Calu3 (cell line): ENCODE measurements at regions of chr3 and their contacts with region 1.

Region 1: GRCh38 chr3:29521751-29522150 is 240.9 kb downstream of the RBMS3 start:
- DNase-seq: no peak
- H3K4me3 Mint-ChIP-seq: no peak overlapping the region
- H3K27ac Mint-ChIP-seq: no peak overlapping the region
- H3K4me1 Mint-ChIP-seq: peaks cover 26% of the 10 kb centered on the region
- H3K27me3 Mint-ChIP-seq: no peaks in the 10 kb centered on the region
- CTCF ChIP-seq: no peak

Region 2: DNA sequence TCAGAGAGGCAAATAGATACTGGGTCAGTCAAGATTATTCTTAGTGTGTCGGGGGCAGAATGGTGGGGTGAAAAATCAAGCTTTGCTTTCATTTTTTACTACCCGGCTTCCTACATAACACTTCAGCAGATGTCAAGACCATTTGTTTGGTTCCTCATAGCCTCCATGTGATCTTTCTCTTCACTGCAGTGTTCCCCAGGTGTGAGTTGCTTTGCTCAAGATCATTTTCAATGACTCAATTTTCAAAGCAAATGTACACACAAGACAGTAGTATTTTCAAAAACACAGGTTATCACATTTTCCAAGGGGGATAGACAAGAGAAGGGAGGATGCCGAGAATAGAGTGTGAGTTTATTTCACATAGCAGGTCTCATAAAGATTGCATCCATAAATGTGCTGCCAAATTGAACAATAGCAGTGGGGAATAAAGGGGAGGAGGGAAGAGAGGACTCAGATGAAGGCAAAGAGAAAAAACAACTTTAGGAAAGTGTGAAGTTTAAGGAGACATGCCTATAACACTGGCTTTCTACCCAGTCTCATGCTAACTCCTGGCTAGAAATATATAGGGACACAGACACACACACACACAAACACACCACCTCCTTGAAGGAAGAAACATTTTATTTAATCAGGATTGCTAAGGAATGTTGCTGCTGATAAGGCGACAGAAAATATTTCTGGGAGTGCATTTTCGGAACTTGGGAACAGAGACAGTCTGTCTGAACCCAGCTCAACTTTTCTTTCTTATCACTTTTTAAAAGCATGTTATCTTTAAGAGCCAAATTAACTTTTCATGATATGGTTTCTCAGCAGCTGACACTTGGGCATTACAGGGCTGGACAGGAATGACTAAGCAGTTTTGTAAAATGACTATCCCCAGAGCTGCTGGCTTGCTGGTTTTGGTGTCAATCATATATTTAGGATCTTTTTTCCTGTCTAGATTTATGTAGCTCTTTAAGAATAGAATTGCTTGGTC is 161.6 kb after region 1 on chr3:
- CTCF ChIA-PET with region 1: no interaction called
- intact Hi-C with region 1: loop called (anchors 5 kb)
- DNase-seq: no peak
- H3K4me3 Mint-ChIP-seq: no peak overlapping the region
- H3K27ac Mint-ChIP-seq: peak overlapping the region; percentile 27
- H3K4me1 Mint-ChIP-seq: peaks cover 15% of the 10 kb centered on the region
- H3K27me3 Mint-ChIP-seq: no peaks in the 10 kb centered on the region
- CTCF ChIP-seq: no peak